ENCODE measurements at regions of chr22 and their contacts with region 1.

Region 1: DNA sequence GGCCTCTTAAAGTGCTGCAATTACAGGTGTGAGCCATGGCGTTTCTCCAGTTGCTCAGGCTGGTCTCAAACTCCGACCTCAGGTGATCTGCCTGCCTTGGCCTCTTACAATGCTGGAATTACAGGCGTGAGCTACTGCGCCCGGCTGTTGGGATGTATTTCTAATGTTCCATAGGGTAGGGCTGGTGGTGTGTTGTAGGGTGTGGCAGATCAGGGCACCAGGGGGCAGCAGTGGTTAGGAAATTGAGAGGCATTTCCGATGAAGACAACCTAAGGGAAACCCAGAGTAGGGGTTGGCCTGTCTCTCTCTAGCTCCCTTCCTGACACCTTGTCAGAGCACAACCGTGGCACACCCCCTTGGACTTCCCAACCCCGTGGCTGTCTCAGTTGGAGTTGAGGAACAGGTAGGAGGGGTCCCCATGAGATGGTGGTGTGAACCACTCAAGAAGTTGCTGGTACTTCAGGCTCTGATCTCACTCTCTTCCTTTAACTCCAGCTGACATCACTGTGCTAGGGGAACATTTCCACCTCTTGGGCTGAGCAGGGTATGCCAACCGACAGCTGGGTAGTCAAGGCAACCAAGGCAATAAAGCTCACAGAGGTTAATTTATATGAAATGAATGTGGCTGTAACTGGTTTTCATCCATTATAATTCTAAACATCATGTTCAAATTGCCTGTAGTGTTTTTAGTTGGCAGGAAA is 33.0 kb downstream of the YWHAH start:
- DNase-seq: peak; percentile 62
- ATAC-seq: peak; percentile 93
- H3K4me3 Mint-ChIP-seq: no peak overlapping the region
- H3K27ac Mint-ChIP-seq: no peak overlapping the region
- H3K4me1 Mint-ChIP-seq: peaks cover 12% of the 10 kb centered on the region
- H3K27me3 Mint-ChIP-seq: no peaks in the 10 kb centered on the region
- CTCF ChIP-seq: no peak

Region 2: GRCh38 chr22:32024796-32025195 is 47.5 kb after region 1 on chr22:
- CTCF ChIA-PET with region 1: no interaction called
- POLR2A ChIA-PET with region 1: no interaction called
- intact Hi-C with region 1: loop called (anchors 2 kb)
- DNase-seq: no peak
- ATAC-seq: no peak
- H3K4me3 Mint-ChIP-seq: no peak overlapping the region
- H3K27ac Mint-ChIP-seq: no peak overlapping the region
- H3K4me1 Mint-ChIP-seq: no peaks in the 10 kb centered on the region
- H3K27me3 Mint-ChIP-seq: peaks cover 15% of the 10 kb centered on the region
- CTCF ChIP-seq: no peak

Region 3: DNA sequence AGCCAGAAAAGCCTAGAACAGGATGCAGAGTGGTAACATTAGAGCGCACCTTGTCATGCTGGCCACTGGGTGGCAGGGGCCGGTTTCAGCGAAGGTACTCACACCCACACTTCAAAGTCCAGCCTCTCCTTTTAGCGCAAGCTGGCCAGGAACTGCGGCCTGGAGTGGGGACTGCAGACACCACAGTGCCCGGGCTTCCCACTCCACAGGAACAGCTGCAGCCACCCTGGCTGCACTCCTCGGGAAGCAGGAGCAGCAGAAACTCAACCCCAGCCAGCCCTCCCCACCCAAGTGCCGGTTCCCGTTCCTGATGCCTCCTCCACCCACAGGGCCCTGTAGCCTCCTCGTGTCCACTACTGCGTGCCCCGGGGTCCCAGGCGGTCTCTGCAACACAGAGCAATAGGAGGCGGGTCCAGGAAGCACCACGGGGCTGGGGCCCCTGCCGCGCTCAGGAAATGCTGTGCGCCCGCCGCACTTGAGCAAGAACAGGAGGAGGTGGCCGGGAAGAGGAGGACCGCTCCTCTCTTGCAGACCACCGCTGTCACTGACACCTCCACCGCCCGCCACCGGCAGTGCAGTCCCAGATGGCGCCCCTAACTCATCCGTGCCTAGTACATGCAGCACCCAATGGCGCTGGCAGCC is 225.4 kb after region 1 on chr22:
- CTCF ChIA-PET with region 1: no interaction called
- POLR2A ChIA-PET with region 1: no interaction called
- intact Hi-C with region 1: loop called (anchors 1 kb)
- DNase-seq: no peak
- ATAC-seq: no peak
- H3K4me3 Mint-ChIP-seq: no peak overlapping the region
- H3K27ac Mint-ChIP-seq: no peak overlapping the region
- H3K4me1 Mint-ChIP-seq: no peaks in the 10 kb centered on the region
- H3K27me3 Mint-ChIP-seq: peaks cover 40% of the 10 kb centered on the region
- CTCF ChIP-seq: no peak

Region 4: GRCh38 chr22:32444068-32444467 is 466.8 kb after region 1 on chr22:
- CTCF ChIA-PET with region 1: interaction called, 14 read pairs
- POLR2A ChIA-PET with region 1: no interaction called
- intact Hi-C with region 1: loop called (anchors 1 kb)
- DNase-seq: no peak
- ATAC-seq: no peak
- H3K4me3 Mint-ChIP-seq: no peak overlapping the region
- H3K27ac Mint-ChIP-seq: no peak overlapping the region
- H3K4me1 Mint-ChIP-seq: no peaks in the 10 kb centered on the region
- H3K27me3 Mint-ChIP-seq: peaks cover 7% of the 10 kb centered on the region
- CTCF ChIP-seq: no peak

Region 5: DNA sequence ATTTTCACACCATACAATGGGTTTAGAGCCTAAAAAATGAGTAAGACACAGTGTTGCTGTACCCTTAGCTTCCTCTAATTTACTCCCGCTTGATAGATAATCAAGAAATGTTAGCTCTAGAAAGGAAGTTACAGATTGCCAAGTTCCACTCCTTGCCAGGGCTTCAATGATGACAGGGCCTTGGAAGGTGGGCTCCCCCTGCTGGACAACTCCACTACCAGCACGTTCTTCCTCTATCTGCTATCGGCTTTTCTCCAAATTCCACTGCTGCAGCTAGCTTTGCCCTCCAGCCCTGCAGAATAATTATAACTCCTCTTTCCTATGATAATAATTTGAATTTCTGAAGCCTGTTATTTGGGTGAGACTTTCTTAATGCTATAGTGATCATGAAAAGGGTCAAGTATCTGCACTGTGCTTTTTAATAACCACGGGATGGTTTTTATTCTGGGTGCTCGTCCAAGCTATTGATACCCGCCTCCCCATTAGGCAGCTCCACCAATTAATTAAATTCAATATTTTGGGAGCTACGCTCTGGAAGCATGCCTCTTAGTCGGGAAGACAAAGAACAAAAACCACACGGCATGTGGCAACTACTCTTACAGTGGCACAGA is 1071.9 kb after region 1 on chr22:
- CTCF ChIA-PET with region 1: no interaction called
- POLR2A ChIA-PET with region 1: no interaction called
- intact Hi-C with region 1: loop called (anchors 1 kb)
- DNase-seq: peak; percentile 35
- ATAC-seq: peak; percentile 65
- H3K4me3 Mint-ChIP-seq: no peak overlapping the region
- H3K27ac Mint-ChIP-seq: no peak overlapping the region
- H3K4me1 Mint-ChIP-seq: peaks cover 17% of the 10 kb centered on the region
- H3K27me3 Mint-ChIP-seq: peaks cover 27% of the 10 kb centered on the region
- CTCF ChIP-seq: peak; percentile 93